Motor neuron (in vitro differentiated cells): ENCODE measurements at regions of chr10 and their contacts with region 1.

Region 1: GRCh38 chr10:56662765-56663447 is 301.8 kb upstream of the ZWINT start:
- ATAC-seq: no peak
- H3K4me3 ChIP-seq: no peak overlapping the region
- H3K27ac ChIP-seq: no peak overlapping the region
- H3K4me1 ChIP-seq: no peaks in the 10 kb centered on the region

Region 2: DNA sequence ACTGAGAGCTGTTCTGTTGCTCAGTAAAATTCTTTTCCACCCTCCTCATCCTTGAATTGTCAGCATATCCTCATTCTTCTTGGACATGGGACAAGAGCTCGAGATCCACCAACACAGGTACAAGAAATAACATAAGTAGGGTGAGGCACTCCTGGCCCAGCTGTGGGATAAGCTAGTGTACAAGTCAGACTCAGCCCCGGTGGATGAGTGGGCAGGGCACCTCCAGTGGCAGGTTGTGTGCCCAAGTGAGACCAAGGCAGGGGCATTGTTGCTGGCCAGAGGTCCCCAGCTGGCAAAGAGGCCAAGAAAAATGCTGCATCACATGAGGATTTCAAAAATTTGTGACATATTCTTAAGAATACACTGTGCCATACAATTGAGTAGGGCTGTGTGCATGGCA is 100.2 kb after region 1 on chr10:
- in situ Hi-C with region 1: loop called in 1 of 9 experiments (anchors 25 kb)
- ATAC-seq: no peak
- H3K4me3 ChIP-seq: no peak overlapping the region
- H3K27ac ChIP-seq: no peak overlapping the region
- H3K4me1 ChIP-seq: no peaks in the 10 kb centered on the region